Aorta (tissue), 5 donors: ENCODE measurements at regions of chr22 and their contacts with region 1.

Region 1: DNA sequence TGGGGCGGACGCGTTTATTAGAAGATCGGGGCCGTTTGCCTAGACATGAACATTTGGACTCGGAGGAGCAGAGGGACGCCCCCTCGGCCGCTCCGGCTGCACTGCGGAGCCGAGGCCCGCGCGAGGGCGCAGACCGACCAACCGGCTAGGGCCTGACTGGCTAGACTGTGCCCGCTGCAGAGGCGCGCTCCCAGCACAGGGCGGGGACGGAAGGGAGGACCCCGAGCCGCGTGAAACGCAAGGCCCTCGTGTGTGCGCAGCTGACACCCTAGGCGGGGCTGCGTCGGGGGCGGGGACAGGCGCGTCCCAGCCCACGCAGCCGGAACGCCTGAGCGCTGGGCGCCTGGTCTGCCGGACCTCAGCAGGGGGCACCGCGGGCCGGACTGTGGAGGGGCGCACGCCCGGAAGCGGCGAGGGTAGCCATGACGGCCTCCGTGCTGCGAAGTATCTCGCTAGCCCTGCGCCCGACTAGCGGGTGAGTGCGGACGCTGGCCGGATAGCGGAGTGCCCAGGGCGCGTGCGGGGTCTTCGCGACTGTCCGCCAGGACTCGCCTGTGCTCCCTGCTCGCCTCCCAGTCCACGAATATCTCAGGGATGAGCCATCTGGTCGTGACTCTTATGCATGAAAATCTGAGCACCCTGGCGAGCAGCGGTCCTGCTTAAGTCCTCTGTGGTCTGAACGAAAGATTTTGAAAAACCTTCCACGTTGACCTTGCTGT is at the start of gene MRPL40:
- DNase-seq: peak; percentile 97
- ATAC-seq: peak; percentile 99
- H3K4me3 ChIP-seq: peak within 1 kb of the TSS; percentile 98
- H3K27ac ChIP-seq: peak within 1 kb of the TSS; percentile 30 to 89
- H3K4me1 ChIP-seq: no peaks in the 10 kb centered on the region
- H3K27me3 ChIP-seq: no peaks in the 10 kb centered on the region
- total RNA-seq, gene MRPL40: 13.9 to 16.4 TPM

Region 2: GRCh38 chr22:18965526-18966421 is 466.5 kb before region 1 on chr22:
- intact Hi-C with region 1: no loop called
- DNase-seq: peak; percentile 26 to 72
- ATAC-seq: no peak
- H3K4me3 ChIP-seq: no peak overlapping the region
- H3K27ac ChIP-seq: no peak overlapping the region
- H3K4me1 ChIP-seq: no peaks in the 10 kb centered on the region
- H3K27me3 ChIP-seq: no peaks in the 10 kb centered on the region

Region 3: GRCh38 chr22:19143967-19144400 is 288.3 kb before region 1 on chr22:
- intact Hi-C with region 1: loop called in 1 of 2 experiments (anchors 10 kb)
- DNase-seq: no peak
- ATAC-seq: no peak
- H3K4me3 ChIP-seq: peak overlapping the region; percentile 44 to 69
- H3K27ac ChIP-seq: peak overlapping the region in 1 of 2 donors; percentile 58
- H3K4me1 ChIP-seq: no peaks in the 10 kb centered on the region
- H3K27me3 ChIP-seq: no peaks in the 10 kb centered on the region

Region 4: GRCh38 chr22:19447388-19448075 is 15.2 kb after region 1 on chr22 and contains the start of gene C22orf39:
- intact Hi-C with region 1: loop called in 1 of 2 experiments (anchors 1 kb)
- DNase-seq: peak; percentile 90 to 94
- ATAC-seq: peak; percentile 96
- H3K4me3 ChIP-seq: peak within 1 kb of the TSS; percentile 64 to 83
- H3K27ac ChIP-seq: peak within 1 kb of the TSS in 1 of 2 donors; percentile 87
- H3K4me1 ChIP-seq: no peaks in the 10 kb centered on the region
- H3K27me3 ChIP-seq: no peaks in the 10 kb centered on the region
- total RNA-seq, gene C22orf39: 29.3 to 33.4 TPM

Region 5: GRCh38 chr22:19479357-19480172 is 47.3 kb after region 1 on chr22 and contains the start of gene CDC45:
- intact Hi-C with region 1: loop called (anchors 1 to 5 kb)
- DNase-seq: peak; percentile 97 to 98
- ATAC-seq: peak; percentile 98
- H3K4me3 ChIP-seq: peak within 1 kb of the TSS; percentile 47 to 71
- H3K27ac ChIP-seq: peak within 1 kb of the TSS; percentile 91 to 99
- H3K4me1 ChIP-seq: no peaks in the 10 kb centered on the region
- H3K27me3 ChIP-seq: no peaks in the 10 kb centered on the region
- total RNA-seq, gene CDC45: 0.68 to 1.0 TPM